BJ (cell line): ENCODE measurements at regions of chr4 and their contacts with region 1.

Region 1: DNA sequence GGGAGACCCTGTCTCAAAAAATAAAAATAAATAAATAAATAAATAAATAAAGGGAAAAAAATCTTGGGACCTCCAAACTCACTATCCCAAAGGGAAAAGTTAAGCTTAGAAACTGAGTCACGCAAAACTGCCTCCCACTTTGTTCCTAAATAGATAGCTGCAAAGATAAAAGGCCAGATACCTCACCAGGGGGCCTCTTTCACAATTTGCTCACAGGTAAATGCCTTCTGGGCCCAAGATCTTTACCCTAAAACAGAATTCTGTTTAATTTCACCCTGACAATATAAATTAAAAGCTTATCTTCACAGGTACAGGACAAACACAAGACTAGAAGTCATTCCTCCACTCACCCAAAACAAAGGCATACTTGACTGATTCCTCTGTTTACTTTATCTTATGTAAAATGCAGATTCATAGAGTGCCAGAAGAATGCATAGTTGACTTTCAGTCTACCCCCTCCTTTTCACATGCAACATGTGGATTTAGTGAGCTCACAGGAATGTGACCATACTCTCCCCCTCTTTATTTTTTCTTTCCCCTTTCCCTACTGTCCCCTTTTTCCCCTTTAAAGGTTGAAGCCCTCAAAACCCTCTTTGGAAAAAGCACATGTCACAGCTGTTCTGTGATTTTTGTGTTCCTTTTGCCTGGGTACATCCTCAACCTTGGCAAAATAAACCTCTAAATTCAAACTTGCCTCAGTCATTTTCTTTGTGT is 23.4 kb downstream of the ELF2 start:
- DNase-seq: no peak
- H3K4me3 ChIP-seq: no peak overlapping the region
- H3K27me3 ChIP-seq: no peaks in the 10 kb centered on the region
- CTCF ChIP-seq: no peak

Region 2: DNA sequence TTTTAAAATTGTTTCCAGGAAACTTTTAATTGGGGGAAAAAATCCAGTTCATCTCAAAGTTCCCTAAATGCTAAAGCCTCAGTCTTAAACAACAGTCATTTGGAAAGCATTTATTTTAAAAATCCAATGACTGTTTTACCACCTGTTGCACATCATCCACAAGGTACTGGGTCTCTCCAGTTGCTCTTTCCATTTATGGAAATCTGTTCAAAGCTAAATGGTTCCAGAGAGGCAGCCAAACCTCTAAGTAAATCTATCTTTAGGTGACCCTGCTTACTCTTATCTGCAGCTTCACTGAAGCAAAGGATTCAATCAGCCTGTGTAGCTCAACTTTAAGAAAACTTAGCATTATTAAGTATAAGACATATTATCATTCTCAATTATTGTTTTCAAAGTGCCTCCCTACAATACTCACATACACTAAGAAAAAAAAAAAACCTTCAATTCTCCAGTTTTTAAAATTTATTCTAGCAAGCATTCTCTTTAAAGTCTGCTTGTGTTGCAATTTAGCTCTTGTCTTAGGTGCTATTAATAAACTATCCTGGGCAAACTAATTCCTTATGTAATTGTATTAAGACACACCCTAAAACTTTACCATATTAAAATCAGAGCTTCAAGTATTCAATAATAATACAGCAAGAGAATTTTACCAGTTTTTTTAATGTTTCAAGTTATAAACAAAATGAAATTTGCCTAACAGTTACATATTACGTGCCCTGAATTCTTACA is 77.4 kb before region 1 on chr4:
- CTCF ChIA-PET with region 1: no interaction called
- POLR2A ChIA-PET with region 1: interaction called, 15 read pairs
- DNase-seq: no peak
- H3K4me3 ChIP-seq: no peak overlapping the region
- H3K27me3 ChIP-seq: no peaks in the 10 kb centered on the region
- CTCF ChIP-seq: no peak

Region 3: GRCh38 chr4:139229534-139230039 is 76.0 kb after region 1 on chr4:
- CTCF ChIA-PET with region 1: no interaction called
- POLR2A ChIA-PET with region 1: no interaction called
- DNase-seq: no peak
- H3K4me3 ChIP-seq: no peak overlapping the region
- H3K27me3 ChIP-seq: no peaks in the 10 kb centered on the region
- CTCF ChIP-seq: peak; percentile 65